ENCODE measurements at regions of chr20 and their contacts with region 1.

Region 1: DNA sequence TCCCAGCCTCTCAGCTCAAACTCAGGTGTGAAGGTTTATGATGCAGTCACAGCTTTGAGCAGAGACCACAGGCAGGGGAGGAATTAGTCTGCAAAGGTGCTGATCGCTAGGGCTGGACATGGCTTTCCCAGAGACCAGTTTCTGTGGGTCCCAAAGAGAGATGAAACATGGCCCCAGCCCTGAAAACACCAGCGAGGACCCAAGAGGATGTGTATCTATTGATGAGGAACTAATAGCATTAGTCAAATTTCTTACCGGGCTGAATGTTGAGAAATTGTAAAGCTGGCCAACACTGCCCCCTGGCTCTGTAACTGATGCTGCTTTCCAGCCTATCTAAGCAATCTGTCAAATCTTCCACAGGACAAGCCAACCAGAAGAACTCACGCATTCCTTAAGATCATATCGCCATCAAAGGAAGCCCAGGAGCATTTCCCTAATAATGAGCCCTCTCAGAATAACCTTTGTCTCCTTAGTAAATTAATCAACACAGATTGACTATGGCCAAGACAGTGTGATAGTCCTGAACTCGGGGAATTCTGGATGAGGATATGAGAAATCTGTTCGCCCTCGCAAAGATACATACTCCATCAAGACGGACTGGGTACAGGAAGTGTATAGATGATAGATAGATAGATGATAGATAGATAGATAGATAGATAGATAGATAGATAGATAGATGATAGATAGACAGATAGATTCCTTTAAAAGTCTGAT is 7.8 kb upstream of the ACSS1 start:
- DNase-seq: peak; percentile 42 to 77 (median 63)
- H3K4me3 ChIP-seq: no peak overlapping the region
- H3K4me3 Mint-ChIP-seq: peak overlapping the region in 1 of 7 donors; percentile 29
- H3K27ac ChIP-seq: no peak overlapping the region
- H3K27ac Mint-ChIP-seq: peak overlapping the region in 2 of 8 donors; percentile 41 to 83
- H3K4me1 ChIP-seq: peaks cover 4% of the 10 kb centered on the region
- H3K4me1 Mint-ChIP-seq: peaks cover 3 to 9% (median 7%) of the 10 kb centered on the region in 3 donors
- H3K27me3 ChIP-seq: no peaks in the 10 kb centered on the region
- H3K27me3 Mint-ChIP-seq: peaks cover 3 to 26% of the 10 kb centered on the region in 2 donors

Region 2: DNA sequence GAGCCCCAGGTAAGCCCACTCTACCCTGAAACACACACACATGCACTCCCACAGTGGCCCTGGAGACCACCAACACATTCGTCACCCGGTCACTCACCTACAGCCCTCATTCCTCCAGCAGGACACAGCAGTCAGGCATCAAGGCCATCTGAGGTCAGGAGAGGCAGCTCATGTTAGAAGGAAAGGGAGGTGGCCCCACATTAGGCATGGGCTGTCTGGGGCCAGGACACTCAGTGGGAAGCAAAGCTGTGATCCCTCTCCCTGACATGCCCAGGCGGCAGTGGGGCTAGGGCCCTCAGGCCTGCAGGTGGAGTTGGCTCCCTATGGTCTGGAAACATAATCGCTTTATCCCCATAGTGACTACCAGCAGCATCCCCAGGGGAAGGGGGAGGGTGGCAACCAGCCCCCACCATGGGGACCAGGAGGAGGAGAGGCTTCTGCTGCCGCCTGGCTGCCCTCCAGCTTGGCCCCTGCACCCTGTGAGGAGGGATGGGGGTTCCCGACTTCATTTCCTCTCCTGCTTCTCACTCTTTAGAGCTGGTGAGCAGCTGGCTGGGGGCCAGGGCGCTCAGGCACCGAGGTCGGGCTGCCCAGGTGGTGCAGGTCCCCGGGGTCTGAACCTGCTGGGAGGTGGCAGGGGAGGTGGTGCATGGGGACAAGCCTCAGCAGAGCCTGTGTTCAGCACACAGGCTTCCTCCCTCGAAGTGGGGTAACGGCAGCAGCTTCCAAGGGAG is 193.3 kb before region 1 on chr20:
- CTCF ChIA-PET with region 1: no interaction called
- POLR2A ChIA-PET with region 1: no interaction called
- DNase-seq: no peak
- H3K4me3 ChIP-seq: no peak overlapping the region
- H3K4me3 Mint-ChIP-seq: no peak overlapping the region
- H3K27ac ChIP-seq: no peak overlapping the region
- H3K27ac Mint-ChIP-seq: no peak overlapping the region
- H3K4me1 ChIP-seq: no peaks in the 10 kb centered on the region
- H3K4me1 Mint-ChIP-seq: no peaks in the 10 kb centered on the region
- H3K27me3 ChIP-seq: no peaks in the 10 kb centered on the region
- H3K27me3 Mint-ChIP-seq: peaks cover 15 to 30% of the 10 kb centered on the region in 2 donors

Region 3: DNA sequence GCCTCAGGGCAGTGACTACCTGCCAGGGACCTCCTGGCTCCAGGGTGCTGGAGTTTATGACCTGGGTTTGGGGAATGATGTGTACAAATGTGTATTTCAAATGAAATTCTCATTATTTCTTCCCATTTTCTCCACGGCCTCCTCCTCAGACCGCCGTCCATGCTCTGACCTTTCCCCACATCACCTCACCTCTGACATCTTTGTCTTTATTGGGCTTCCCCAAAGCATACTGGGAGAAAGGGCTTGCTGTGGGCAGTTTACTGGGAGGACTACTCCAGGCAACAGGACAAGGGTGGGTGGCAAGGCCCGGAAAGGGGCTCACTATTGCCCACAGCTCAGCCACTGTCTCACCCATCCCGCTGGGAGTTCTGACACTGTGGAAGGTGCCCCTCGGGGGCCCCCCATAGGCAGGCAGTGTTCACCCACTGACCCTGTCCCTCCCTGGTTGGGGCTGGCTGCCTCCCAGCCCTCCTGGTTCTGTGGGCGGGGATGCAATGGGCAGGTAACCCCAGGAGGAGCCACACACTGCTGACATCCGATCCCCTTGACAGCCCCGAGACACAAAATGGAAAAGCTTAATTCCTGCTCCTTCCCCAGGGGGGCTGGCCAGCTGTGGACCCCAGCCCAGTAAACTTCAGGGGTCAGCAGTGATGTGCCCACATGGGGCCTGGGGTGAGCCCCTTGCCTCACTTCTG is 156.5 kb before region 1 on chr20:
- CTCF ChIA-PET with region 1: no interaction called
- POLR2A ChIA-PET with region 1: no interaction called
- DNase-seq: no peak
- H3K4me3 ChIP-seq: no peak overlapping the region
- H3K4me3 Mint-ChIP-seq: no peak overlapping the region
- H3K27ac ChIP-seq: no peak overlapping the region
- H3K27ac Mint-ChIP-seq: no peak overlapping the region
- H3K4me1 ChIP-seq: no peaks in the 10 kb centered on the region
- H3K4me1 Mint-ChIP-seq: no peaks in the 10 kb centered on the region
- H3K27me3 ChIP-seq: no peaks in the 10 kb centered on the region
- H3K27me3 Mint-ChIP-seq: peaks cover 0 to 3% of the 10 kb centered on the region in 2 donors

Region 4: DNA sequence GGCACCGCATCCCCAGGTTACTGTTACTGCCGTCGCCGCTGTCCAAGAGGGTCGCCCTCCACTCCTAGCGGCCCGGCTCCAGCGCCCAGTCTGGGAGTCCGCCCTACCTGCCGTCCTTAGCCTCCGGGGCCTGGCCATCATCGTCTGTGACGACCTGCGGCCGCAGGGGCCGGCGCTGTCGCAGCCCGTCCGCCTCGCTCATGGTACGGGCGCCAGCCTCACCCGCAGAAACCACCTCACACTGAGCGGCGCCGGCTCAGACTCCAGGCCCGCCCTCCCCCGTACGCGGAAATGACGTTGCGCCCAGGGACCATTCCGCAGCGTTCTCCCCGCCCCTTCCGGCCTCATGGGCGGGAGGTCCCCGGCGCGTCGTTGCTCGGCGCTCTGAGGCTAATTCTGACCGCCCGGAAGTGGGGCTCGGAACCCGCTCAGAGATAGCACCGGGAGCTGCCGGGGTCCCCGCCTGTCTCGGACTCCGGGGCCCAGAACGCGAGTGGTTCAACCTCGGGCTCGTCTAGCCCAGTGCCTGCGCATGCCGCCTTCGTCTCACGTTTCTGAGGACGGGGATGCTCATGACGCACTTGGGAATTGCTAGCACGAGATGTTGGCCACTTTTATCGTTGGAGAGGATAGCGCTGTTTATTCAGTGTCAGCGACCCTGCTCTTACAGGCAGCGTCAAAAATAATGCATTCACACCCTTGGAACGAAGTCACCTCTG is 73.1 kb before region 1 on chr20 and contains the start of gene APMAP:
- CTCF ChIA-PET with region 1: interaction called, 147 read pairs
- POLR2A ChIA-PET with region 1: interaction called, 6 read pairs
- DNase-seq: peak; percentile 94 to 97 (median 95)
- H3K4me3 ChIP-seq: peak within 1 kb of the TSS; percentile 84
- H3K4me3 Mint-ChIP-seq: peak within 1 kb of the TSS; percentile 94 to 99 (median 96)
- H3K27ac ChIP-seq: peak within 1 kb of the TSS; percentile 95
- H3K27ac Mint-ChIP-seq: peak within 1 kb of the TSS; percentile 97 to 100 (median 98)
- H3K4me1 ChIP-seq: peaks cover 60% of the 10 kb centered on the region
- H3K4me1 Mint-ChIP-seq: peaks cover 60 to 71% (median 67%) of the 10 kb centered on the region in 3 donors
- H3K27me3 ChIP-seq: no peaks in the 10 kb centered on the region
- H3K27me3 Mint-ChIP-seq: peaks cover 0 to 6% of the 10 kb centered on the region in 2 donors
- total RNA-seq, gene APMAP: 82.5 to 83.6 TPM

Region 5: DNA sequence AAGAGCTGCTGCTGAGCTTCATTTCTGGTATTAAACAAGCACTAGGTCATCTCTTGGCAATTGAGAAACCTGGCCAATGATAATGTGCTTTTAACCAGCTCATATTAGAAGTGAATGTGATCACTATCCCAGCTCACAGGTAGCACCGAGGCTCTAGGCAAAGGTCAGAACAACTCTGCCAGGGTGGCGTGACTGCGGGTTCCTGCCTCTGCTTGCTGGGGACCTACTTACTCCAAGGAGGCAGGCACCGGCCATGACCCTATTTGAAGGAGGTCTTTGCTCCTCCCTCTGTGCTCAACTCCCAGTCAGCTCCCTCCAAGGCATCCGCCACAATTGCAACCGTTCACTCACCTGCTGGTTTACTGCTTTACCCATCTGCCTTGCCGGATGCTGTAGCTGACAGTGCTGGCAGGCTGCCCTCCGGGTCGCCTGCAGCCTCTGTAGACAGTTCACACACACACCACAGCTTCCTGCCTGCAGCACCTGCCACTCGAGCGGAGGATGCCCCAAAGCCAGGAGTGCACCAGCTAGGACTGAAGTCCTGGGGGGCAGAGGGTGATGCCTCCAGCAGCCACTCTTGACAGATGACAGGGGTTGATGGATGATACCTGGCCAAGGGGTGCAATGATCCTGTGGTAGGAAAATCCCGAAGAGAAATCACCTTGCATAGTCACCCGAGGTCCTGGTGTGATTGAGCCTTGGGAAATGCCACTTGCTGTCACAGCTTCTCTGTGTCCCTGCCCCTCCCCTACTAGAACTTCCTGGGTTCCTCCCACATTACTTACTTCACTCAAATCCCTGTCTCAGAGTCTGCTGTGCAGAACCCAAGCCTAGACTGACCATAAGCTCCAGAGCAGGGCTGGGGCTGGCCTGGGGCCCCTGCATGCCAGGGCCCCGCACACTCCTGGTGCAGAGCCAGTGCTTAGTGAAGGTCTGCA is 25.0 kb after region 1 on chr20:
- CTCF ChIA-PET with region 1: interaction called, 15 read pairs
- POLR2A ChIA-PET with region 1: interaction called, 3 read pairs
- DNase-seq: peak; percentile 64 to 89 (median 80)
- H3K4me3 ChIP-seq: peak overlapping the region; percentile 29
- H3K4me3 Mint-ChIP-seq: peak overlapping the region; percentile 4 to 82 (median 60)
- H3K27ac ChIP-seq: no peak overlapping the region
- H3K27ac Mint-ChIP-seq: peak overlapping the region; percentile 74 to 98 (median 84)
- H3K4me1 ChIP-seq: peaks cover 38% of the 10 kb centered on the region
- H3K4me1 Mint-ChIP-seq: peaks cover 36 to 39% (median 38%) of the 10 kb centered on the region in 3 donors
- H3K27me3 ChIP-seq: peaks cover 2% of the 10 kb centered on the region
- H3K27me3 Mint-ChIP-seq: peaks cover 6 to 13% of the 10 kb centered on the region in 2 donors